ENCODE measurements at regions of chr3 and their contacts with region 1.

Region 1: GRCh38 chr3:148075763-148076716 is 621.7 kb upstream of the AGTR1 start:
- DNase-seq: peak; percentile 67
- H3K4me3 ChIP-seq: no peak overlapping the region
- H3K27ac ChIP-seq: no peak overlapping the region
- H3K27me3 ChIP-seq: no peaks in the 10 kb centered on the region
- CTCF ChIP-seq: peak; percentile 90

Region 2: GRCh38 chr3:147418808-147419701 is 657.0 kb before region 1 on chr3:
- in situ Hi-C with region 1: loop called (anchors 25 kb)
- DNase-seq: peak; percentile 94
- H3K4me3 ChIP-seq: peak overlapping the region; percentile 48
- H3K27ac ChIP-seq: peak overlapping the region; percentile 76
- H3K27me3 ChIP-seq: no peaks in the 10 kb centered on the region
- CTCF ChIP-seq: peak; percentile 1

Region 3: GRCh38 chr3:147538034-147538433 is 538.0 kb before region 1 on chr3:
- in situ Hi-C with region 1: no loop called
- DNase-seq: no peak
- H3K4me3 ChIP-seq: no peak overlapping the region
- H3K27ac ChIP-seq: no peak overlapping the region
- H3K27me3 ChIP-seq: no peaks in the 10 kb centered on the region
- CTCF ChIP-seq: no peak